Activated CD4-positive, alpha-beta memory T cell treated with anti-CD3 and anti-CD28 coated beads for 36 hours (primary cell): ENCODE measurements at regions of chr10 and their contacts with region 1.

Region 1: GRCh38 chr10:788796-789748 is 99.6 kb upstream of the DIP2C start:
- DNase-seq: peak; percentile 62
- H3K4me3 Mint-ChIP-seq: peak overlapping the region; percentile 61
- H3K27ac Mint-ChIP-seq: no peak overlapping the region
- H3K4me1 Mint-ChIP-seq: no peaks in the 10 kb centered on the region
- H3K27me3 Mint-ChIP-seq: peaks cover 6% of the 10 kb centered on the region

Region 2: DNA sequence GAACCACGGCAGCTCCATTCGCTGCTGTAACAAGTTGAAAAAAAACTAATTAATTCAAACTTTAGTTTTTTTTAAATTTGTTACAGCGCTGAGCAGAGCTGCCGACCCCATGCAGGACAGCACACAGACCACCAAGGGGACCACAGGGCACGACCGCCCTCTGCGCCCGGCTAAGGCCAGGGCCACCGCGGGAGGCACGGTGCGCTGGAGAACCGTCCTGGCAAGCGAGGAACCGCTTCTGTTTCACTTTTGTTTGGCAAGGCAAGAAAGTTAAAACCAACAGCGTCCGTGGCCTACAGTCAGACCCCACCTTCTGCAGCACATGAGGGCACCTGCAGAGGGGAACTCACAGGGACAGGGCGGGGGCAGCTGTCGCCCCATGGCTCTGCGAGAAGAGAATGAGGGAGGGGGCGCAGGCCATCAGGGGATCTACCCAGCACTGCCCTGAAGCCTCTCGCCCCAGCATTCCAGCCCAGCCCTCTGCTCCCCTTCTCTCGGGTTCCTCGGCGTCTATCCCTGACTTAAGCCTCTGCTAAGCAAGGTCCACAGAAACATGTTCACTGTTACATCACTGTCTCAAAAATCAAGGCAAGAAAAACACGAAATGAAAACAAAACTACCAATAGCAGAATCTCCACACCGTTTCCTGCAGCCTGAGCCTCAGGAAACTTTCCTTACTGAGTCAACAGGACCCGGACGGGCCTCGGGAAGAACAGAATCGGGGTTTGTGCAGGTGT is 304.0 kb before region 1 on chr10:
- CTCF ChIA-PET with region 1: no interaction called
- POLR2A ChIA-PET with region 1: no interaction called
- intact Hi-C with region 1: no loop called
- DNase-seq: peak; percentile 46
- H3K4me3 Mint-ChIP-seq: peak overlapping the region; percentile 79
- H3K27ac Mint-ChIP-seq: peak overlapping the region; percentile 82
- H3K4me1 Mint-ChIP-seq: peaks cover 8% of the 10 kb centered on the region
- H3K27me3 Mint-ChIP-seq: peaks cover 2% of the 10 kb centered on the region

Region 3: DNA sequence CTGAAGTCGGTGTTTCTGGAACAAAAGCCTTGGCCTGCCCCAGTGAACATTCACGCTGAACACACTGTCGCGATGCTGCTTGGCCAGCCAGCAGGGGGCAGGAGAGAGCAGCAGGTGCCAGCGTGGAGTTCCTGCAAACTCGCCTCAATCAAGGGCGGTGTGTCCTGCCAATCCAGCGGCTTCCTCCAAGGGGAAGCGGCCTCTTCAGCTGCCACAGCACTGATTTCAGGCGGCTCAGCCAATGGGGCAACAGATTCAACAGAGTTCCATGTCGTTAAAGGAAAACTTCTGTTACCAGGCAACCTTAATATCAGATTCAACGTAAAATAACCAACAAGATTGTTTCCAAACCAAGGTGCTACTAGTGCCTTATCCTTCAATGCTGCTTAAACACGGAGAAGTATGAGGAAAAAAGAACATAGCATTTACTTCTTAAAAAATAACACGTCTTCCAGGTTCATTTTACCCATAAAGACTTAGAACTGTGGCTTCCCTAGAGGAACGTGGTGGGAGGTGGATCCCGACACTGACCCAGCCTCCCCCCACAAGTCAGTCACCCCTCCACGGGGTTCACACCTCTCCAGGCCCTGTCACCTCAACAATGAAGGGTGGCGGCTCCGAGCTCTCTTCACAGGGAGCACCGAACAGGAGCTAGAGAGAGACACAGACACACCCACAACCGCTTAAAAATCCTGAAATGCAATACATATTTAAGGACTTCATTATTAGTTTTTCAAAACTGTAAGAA is 277.8 kb before region 1 on chr10:
- CTCF ChIA-PET with region 1: interaction called, 3 read pairs
- POLR2A ChIA-PET with region 1: no interaction called
- intact Hi-C with region 1: loop called (anchors 1 kb)
- DNase-seq: peak; percentile 87
- H3K4me3 Mint-ChIP-seq: no peak overlapping the region
- H3K27ac Mint-ChIP-seq: no peak overlapping the region
- H3K4me1 Mint-ChIP-seq: peaks cover 11% of the 10 kb centered on the region
- H3K27me3 Mint-ChIP-seq: no peaks in the 10 kb centered on the region

Region 4: DNA sequence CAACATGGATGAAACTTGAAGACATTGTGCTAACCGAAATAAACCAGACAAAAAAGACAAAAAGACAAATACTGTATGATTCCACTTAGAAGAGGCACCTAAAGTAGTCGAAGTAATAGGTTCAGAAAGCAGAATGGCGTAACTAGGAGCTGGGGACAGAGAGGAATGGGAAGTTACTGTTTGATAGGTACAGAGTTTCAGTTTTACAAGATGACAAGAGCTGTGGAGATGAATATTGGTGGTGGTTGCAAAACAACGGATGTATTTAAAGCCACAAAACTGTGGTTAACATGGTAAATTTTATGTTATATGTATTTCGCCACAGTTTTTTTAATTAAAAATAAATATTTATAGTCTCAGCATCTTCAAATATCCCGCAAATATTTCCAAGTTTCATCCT is 35.5 kb before region 1 on chr10:
- CTCF ChIA-PET with region 1: no interaction called
- POLR2A ChIA-PET with region 1: no interaction called
- intact Hi-C with region 1: no loop called
- DNase-seq: no peak
- H3K4me3 Mint-ChIP-seq: no peak overlapping the region
- H3K27ac Mint-ChIP-seq: no peak overlapping the region
- H3K4me1 Mint-ChIP-seq: peaks cover 4% of the 10 kb centered on the region
- H3K27me3 Mint-ChIP-seq: no peaks in the 10 kb centered on the region